ENCODE measurements at regions of chr12 and their contacts with region 1.

Region 1: GRCh38 chr12:10190558-10191388 is 11.9 kb downstream of the TMEM52B start:
- DNase-seq: peak; percentile 79 to 81
- H3K4me3 ChIP-seq: no peak overlapping the region
- H3K4me3 Mint-ChIP-seq: no peak overlapping the region
- H3K27ac Mint-ChIP-seq: peak overlapping the region; percentile 4
- H3K4me1 ChIP-seq: peaks cover 34% of the 10 kb centered on the region
- H3K4me1 Mint-ChIP-seq: peaks cover 50% of the 10 kb centered on the region
- H3K27me3 ChIP-seq: no peaks in the 10 kb centered on the region
- H3K27me3 Mint-ChIP-seq: no peaks in the 10 kb centered on the region
- CTCF ChIP-seq: peak; percentile 79 to 96

Region 2: GRCh38 chr12:10012630-10013330 is 178.0 kb before region 1 on chr12:
- CTCF ChIA-PET with region 1: interaction called, 13 read pairs
- POLR2A ChIA-PET with region 1: no interaction called
- intact Hi-C with region 1: loop called (anchors 1 kb)
- DNase-seq: no peak
- H3K4me3 ChIP-seq: no peak overlapping the region
- H3K4me3 Mint-ChIP-seq: no peak overlapping the region
- H3K27ac Mint-ChIP-seq: no peak overlapping the region
- H3K4me1 ChIP-seq: no peaks in the 10 kb centered on the region
- H3K4me1 Mint-ChIP-seq: no peaks in the 10 kb centered on the region
- H3K27me3 ChIP-seq: no peaks in the 10 kb centered on the region
- H3K27me3 Mint-ChIP-seq: peaks cover 22% of the 10 kb centered on the region
- CTCF ChIP-seq: no peak

Region 3: GRCh38 chr12:10153271-10154144 is 37.3 kb before region 1 on chr12:
- CTCF ChIA-PET with region 1: interaction called, 44 read pairs
- POLR2A ChIA-PET with region 1: interaction called, 5 read pairs
- intact Hi-C with region 1: loop called (anchors 1 kb)
- DNase-seq: peak; percentile 78 to 80
- H3K4me3 ChIP-seq: peak overlapping the region; percentile 31
- H3K4me3 Mint-ChIP-seq: peak overlapping the region; percentile 77
- H3K27ac Mint-ChIP-seq: peak overlapping the region; percentile 77
- H3K4me1 ChIP-seq: peaks cover 5% of the 10 kb centered on the region; the same call in 1 of the 2 replicates
- H3K4me1 Mint-ChIP-seq: peaks cover 6% of the 10 kb centered on the region
- H3K27me3 ChIP-seq: no peaks in the 10 kb centered on the region
- H3K27me3 Mint-ChIP-seq: no peaks in the 10 kb centered on the region
- CTCF ChIP-seq: peak; percentile 81 to 98

Region 4: GRCh38 chr12:10175846-10176636 is 14.7 kb before region 1 on chr12:
- CTCF ChIA-PET with region 1: interaction called, 6 read pairs
- POLR2A ChIA-PET with region 1: interaction called, 3 read pairs
- intact Hi-C with region 1: loop called (anchors 1 kb)
- DNase-seq: peak; percentile 58 to 68
- H3K4me3 ChIP-seq: no peak overlapping the region
- H3K4me3 Mint-ChIP-seq: peak overlapping the region; percentile 18
- H3K27ac Mint-ChIP-seq: peak overlapping the region; percentile 77
- H3K4me1 ChIP-seq: peaks cover 91% of the 10 kb centered on the region
- H3K4me1 Mint-ChIP-seq: peaks cover 52% of the 10 kb centered on the region
- H3K27me3 ChIP-seq: no peaks in the 10 kb centered on the region
- H3K27me3 Mint-ChIP-seq: no peaks in the 10 kb centered on the region
- CTCF ChIP-seq: peak; percentile 21 to 46

Region 5: GRCh38 chr12:10364815-10365622 is 174.2 kb after region 1 on chr12:
- CTCF ChIA-PET with region 1: no interaction called
- POLR2A ChIA-PET with region 1: interaction called, 17 read pairs
- intact Hi-C with region 1: no loop called
- DNase-seq: peak; percentile 84 to 88
- H3K4me3 ChIP-seq: peak overlapping the region; percentile 39
- H3K4me3 Mint-ChIP-seq: no peak overlapping the region
- H3K27ac Mint-ChIP-seq: no peak overlapping the region
- H3K4me1 ChIP-seq: peaks cover 57% of the 10 kb centered on the region
- H3K4me1 Mint-ChIP-seq: peaks cover 14% of the 10 kb centered on the region
- H3K27me3 ChIP-seq: no peaks in the 10 kb centered on the region
- H3K27me3 Mint-ChIP-seq: no peaks in the 10 kb centered on the region
- CTCF ChIP-seq: no peak

Measured in Caco-2 (cell line).